ENCODE measurements at regions of chr4 and their contacts with region 1.

Region 1: GRCh38 chr4:122914292-122914904 is 8.0 kb downstream of the NUDT6 start:
- DNase-seq: peak in 3 of 5 donors; percentile 27 to 49 (median 28)
- H3K4me3 ChIP-seq: no peak overlapping the region
- H3K4me3 Mint-ChIP-seq: no peak overlapping the region
- H3K27ac ChIP-seq: no peak overlapping the region
- H3K27ac Mint-ChIP-seq: peak overlapping the region in 1 of 7 donors; percentile 19
- H3K4me1 ChIP-seq: no peaks in the 10 kb centered on the region
- H3K4me1 Mint-ChIP-seq: peaks cover 0 to 2% (median 0%) of the 10 kb centered on the region in 4 donors
- H3K27me3 ChIP-seq: no peaks in the 10 kb centered on the region
- H3K27me3 Mint-ChIP-seq: no peaks in the 10 kb centered on the region

Region 2: GRCh38 chr4:122602277-122603142 is 311.9 kb before region 1 on chr4:
- CTCF ChIA-PET with region 1: interaction called, 15 read pairs
- POLR2A ChIA-PET with region 1: no interaction called
- intact Hi-C with region 1: no loop called
- DNase-seq: peak in 3 of 5 donors; percentile 24 to 30 (median 28)
- H3K4me3 ChIP-seq: no peak overlapping the region
- H3K4me3 Mint-ChIP-seq: peak overlapping the region in 1 of 8 donors; percentile 0
- H3K27ac ChIP-seq: no peak overlapping the region
- H3K27ac Mint-ChIP-seq: no peak overlapping the region
- H3K4me1 ChIP-seq: no peaks in the 10 kb centered on the region
- H3K4me1 Mint-ChIP-seq: peaks cover 0 to 5% (median 2%) of the 10 kb centered on the region in 4 donors
- H3K27me3 ChIP-seq: no peaks in the 10 kb centered on the region
- H3K27me3 Mint-ChIP-seq: peaks cover 0 to 9% of the 10 kb centered on the region in 2 donors

Region 3: DNA sequence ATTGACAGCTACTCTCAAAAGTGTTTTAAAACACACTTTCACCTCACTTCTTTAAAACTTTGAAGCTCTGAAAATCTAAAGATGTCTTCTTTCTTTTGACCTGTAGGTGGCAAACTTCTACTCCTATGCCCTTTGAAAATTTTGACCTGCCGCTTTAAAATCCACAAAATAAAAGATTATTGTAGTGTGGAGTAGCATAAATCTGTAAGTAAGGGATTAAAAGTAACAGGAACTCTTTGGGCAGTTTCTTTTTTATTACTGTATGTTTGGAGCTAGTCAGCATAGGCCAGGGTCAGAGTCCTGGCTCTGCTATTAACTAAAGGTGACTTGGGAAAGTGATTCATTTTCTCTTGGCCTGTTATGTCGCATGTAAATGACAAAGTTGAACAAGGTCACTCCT is 156.4 kb before region 1 on chr4:
- CTCF ChIA-PET with region 1: interaction called, 43 read pairs
- POLR2A ChIA-PET with region 1: no interaction called
- intact Hi-C with region 1: no loop called
- DNase-seq: peak in 4 of 5 donors; percentile 26 to 39 (median 31)
- H3K4me3 ChIP-seq: no peak overlapping the region
- H3K4me3 Mint-ChIP-seq: no peak overlapping the region
- H3K27ac ChIP-seq: no peak overlapping the region
- H3K27ac Mint-ChIP-seq: no peak overlapping the region
- H3K4me1 ChIP-seq: peaks cover 14% of the 10 kb centered on the region
- H3K4me1 Mint-ChIP-seq: peaks cover 10 to 15% (median 10%) of the 10 kb centered on the region in 4 donors
- H3K27me3 ChIP-seq: no peaks in the 10 kb centered on the region
- H3K27me3 Mint-ChIP-seq: peaks cover 7 to 8% of the 10 kb centered on the region in 2 donors

Region 4: GRCh38 chr4:122777846-122778655 is 136.3 kb before region 1 on chr4:
- CTCF ChIA-PET with region 1: no interaction called
- POLR2A ChIA-PET with region 1: no interaction called
- intact Hi-C with region 1: no loop called
- DNase-seq: no peak
- H3K4me3 ChIP-seq: no peak overlapping the region
- H3K4me3 Mint-ChIP-seq: no peak overlapping the region
- H3K27ac ChIP-seq: no peak overlapping the region
- H3K27ac Mint-ChIP-seq: no peak overlapping the region
- H3K4me1 ChIP-seq: no peaks in the 10 kb centered on the region
- H3K4me1 Mint-ChIP-seq: no peaks in the 10 kb centered on the region
- H3K27me3 ChIP-seq: no peaks in the 10 kb centered on the region
- H3K27me3 Mint-ChIP-seq: peaks cover 0 to 2% of the 10 kb centered on the region in 2 donors

Region 5: DNA sequence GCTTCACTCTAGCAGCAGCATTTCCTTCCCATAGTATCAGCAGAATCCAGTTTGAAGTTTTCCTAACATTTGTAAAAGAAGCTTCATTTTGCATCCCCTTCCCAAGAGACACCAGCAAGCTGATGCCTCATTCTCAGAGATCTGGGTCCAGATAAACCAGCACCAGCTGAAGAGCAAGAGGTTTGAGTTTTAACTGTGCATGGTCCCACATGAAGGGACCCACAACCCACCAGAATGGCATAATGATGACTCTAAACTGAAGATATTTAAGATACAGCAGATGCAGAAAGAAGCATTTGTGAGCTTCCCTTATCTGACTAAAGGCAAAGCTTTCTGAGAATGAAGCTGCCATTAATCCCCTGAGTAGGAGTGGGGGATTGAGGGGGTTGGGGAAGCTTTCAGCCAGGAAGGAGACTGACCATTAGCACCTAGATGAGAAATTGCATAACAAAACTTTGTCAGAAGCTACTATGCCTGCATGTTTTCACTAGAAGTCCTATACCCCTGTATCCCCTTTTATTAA is 10.6 kb before region 1 on chr4:
- CTCF ChIA-PET with region 1: interaction called, 12 read pairs
- POLR2A ChIA-PET with region 1: no interaction called
- intact Hi-C with region 1: no loop called
- DNase-seq: no peak
- H3K4me3 ChIP-seq: no peak overlapping the region
- H3K4me3 Mint-ChIP-seq: no peak overlapping the region
- H3K27ac ChIP-seq: no peak overlapping the region
- H3K27ac Mint-ChIP-seq: no peak overlapping the region
- H3K4me1 ChIP-seq: no peaks in the 10 kb centered on the region
- H3K4me1 Mint-ChIP-seq: no peaks in the 10 kb centered on the region
- H3K27me3 ChIP-seq: no peaks in the 10 kb centered on the region
- H3K27me3 Mint-ChIP-seq: no peaks in the 10 kb centered on the region

Region 6: DNA sequence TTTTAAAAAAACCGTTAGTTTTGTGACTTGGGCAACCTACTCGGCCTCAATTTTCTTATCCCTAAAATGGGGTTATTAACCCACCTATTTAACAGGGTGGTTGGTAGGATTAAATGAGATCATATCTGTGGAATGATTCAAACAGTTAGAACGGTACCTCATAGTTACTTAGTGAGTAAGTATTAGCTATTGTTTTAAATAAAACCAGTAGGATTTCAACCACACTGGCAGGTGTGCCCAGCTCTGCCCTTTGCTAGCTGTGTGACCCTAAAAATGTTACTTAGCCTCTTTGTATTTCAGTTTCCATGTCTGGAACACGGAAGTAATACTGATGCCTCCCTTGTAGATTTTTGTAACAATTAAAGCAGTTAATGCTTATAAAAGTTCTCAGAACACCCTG is 256.4 kb after region 1 on chr4:
- CTCF ChIA-PET with region 1: no interaction called
- POLR2A ChIA-PET with region 1: no interaction called
- intact Hi-C with region 1: no loop called
- DNase-seq: no peak
- H3K4me3 ChIP-seq: no peak overlapping the region
- H3K4me3 Mint-ChIP-seq: no peak overlapping the region
- H3K27ac ChIP-seq: no peak overlapping the region
- H3K27ac Mint-ChIP-seq: no peak overlapping the region
- H3K4me1 ChIP-seq: no peaks in the 10 kb centered on the region
- H3K4me1 Mint-ChIP-seq: no peaks in the 10 kb centered on the region
- H3K27me3 ChIP-seq: no peaks in the 10 kb centered on the region
- H3K27me3 Mint-ChIP-seq: no peaks in the 10 kb centered on the region